ENCODE measurements at regions of chr5 and their contacts with region 1.

Region 1: DNA sequence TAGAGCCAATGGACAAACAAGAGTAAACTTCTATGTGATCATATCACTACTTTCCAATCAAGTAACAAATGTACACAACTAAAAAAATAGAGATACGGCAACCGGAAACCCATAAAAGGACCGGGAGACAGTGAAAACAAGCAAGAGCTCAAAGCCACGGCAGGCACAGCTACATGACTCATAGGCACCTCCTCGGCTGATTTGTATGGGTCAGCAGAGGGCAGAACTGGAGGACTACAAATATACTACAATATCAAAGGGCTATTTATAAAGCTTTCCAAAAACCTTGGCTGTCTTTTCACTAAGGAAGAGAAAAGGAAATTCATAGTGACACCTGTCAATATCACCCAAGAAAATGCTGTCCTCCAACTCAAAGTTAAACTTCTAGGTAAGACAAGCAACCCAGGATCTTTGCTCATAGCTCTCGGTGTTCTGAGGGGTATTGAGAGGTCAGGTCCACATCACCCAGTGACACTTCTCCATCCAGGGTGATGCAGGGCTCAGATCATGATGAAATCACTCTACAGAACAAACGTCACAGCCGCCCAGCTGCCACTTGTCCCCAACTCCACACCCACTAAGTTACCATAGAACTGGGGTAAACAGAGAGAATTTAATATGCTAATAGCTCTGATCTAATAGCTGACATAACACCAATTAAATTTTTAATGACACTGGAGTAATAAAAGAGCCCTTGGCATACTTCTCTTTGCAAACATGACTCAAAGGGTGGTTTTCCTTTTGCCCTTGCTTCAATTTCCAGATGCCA is 41.3 kb downstream of the PFDN1 start:
- DNase-seq: peak; percentile 88
- H3K4me3 Mint-ChIP-seq: peak overlapping the region; percentile 46
- H3K27ac Mint-ChIP-seq: peak overlapping the region; percentile 95
- H3K4me1 Mint-ChIP-seq: peaks cover 36% of the 10 kb centered on the region
- H3K27me3 Mint-ChIP-seq: no peaks in the 10 kb centered on the region
- CTCF ChIP-seq: no peak

Region 2: GRCh38 chr5:139795074-139796001 is 466.2 kb before region 1 on chr5 and contains the start of gene PSD2:
- CTCF ChIA-PET with region 1: no interaction called
- intact Hi-C with region 1: no loop called
- DNase-seq: peak; percentile 40
- H3K4me3 Mint-ChIP-seq: peak within 1 kb of the TSS; percentile 25
- H3K27ac Mint-ChIP-seq: no peak within 1 kb of the TSS
- H3K4me1 Mint-ChIP-seq: no peaks in the 10 kb centered on the region
- H3K27me3 Mint-ChIP-seq: peaks cover 95% of the 10 kb centered on the region
- CTCF ChIP-seq: no peak
- total RNA-seq, gene PSD2: not detected in 2 replicates

Region 3: DNA sequence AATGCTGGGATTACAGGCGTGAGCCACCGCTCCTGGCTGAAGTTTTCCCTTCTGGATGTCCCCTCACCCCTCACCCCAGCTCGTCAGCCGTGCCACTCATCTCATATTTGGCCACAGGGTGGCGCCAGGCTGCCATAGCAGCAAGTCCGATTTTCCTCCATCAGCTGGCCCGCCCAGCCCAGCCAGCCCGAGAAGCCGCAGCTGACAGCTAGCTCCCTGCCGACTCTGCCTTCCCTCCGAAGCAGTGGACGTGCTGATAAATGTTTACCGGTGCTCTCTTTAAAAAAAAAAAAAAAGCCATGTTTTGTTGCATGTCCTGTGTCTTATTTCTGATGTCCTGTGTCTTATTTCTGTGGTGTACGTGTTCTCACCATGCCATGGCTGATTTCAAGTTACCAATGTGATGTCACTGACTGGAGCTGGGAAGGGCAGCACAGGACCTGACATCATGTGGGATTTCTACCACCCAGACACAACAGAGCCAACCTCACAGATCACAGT is 17.0 kb before region 1 on chr5:
- CTCF ChIA-PET with region 1: interaction called, 13 read pairs
- intact Hi-C with region 1: no loop called
- DNase-seq: peak; percentile 92
- H3K4me3 Mint-ChIP-seq: no peak overlapping the region
- H3K27ac Mint-ChIP-seq: peak overlapping the region; percentile 67
- H3K4me1 Mint-ChIP-seq: peaks cover 31% of the 10 kb centered on the region
- H3K27me3 Mint-ChIP-seq: no peaks in the 10 kb centered on the region
- CTCF ChIP-seq: peak; percentile 83

Region 4: GRCh38 chr5:140295414-140295813 is 33.8 kb after region 1 on chr5:
- CTCF ChIA-PET with region 1: interaction called, 10 read pairs
- intact Hi-C with region 1: loop called (anchors 5 kb)
- DNase-seq: peak; percentile 63
- H3K4me3 Mint-ChIP-seq: no peak overlapping the region
- H3K27ac Mint-ChIP-seq: peak overlapping the region; percentile 62
- H3K4me1 Mint-ChIP-seq: peaks cover 60% of the 10 kb centered on the region
- H3K27me3 Mint-ChIP-seq: no peaks in the 10 kb centered on the region
- CTCF ChIP-seq: no peak

Region 5: DNA sequence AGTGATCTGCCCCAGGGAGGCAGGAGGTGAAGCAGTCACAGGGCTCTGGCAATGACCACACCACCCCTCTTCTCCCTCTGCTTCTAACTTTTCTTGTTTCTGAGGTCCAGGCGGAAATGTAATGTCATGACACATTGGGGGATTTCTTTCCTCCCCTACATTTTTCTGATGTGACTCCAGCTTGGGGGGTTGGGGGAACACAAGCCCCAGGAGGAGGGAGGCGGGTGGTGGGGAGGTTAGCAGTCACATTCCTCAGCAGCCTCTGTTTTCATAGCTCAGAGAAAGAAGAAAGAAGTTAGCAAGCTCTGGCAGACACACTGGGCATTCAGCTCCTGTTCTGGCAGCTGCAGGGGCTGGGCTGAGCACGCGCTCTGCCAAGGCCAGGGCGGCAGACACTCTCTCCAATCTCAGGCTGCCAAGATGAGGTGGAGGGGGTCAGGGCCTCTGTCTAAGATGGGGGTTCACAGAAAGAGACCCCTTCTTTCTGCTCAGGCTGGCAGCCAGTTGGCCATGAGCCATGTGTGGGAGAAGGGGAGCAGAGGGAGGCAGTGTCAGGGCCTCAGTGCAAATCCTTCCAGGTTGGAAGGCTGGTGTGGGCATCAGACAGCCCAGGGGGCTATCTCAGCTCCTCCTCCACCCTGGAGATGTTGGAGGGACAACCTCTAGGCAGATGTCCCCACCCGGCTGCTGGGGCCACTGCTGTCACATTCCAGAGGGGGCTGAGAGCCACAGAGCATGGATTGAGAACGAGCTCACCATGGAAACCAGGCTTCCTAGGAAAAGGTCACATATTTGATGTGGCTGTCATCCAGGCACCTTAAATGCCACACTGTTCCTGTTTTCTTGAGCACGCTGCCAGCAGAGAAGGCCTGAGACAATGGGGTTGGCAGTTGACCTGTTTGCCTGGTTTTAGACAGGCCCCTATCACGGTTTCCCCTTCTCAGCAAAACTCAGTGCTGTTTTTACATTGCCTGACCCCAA is 61.5 kb after region 1 on chr5:
- CTCF ChIA-PET with region 1: interaction called, 5 read pairs
- intact Hi-C with region 1: loop called (anchors 2 kb)
- DNase-seq: peak; percentile 63
- H3K4me3 Mint-ChIP-seq: no peak overlapping the region
- H3K27ac Mint-ChIP-seq: peak overlapping the region; percentile 55
- H3K4me1 Mint-ChIP-seq: peaks cover 39% of the 10 kb centered on the region
- H3K27me3 Mint-ChIP-seq: no peaks in the 10 kb centered on the region
- CTCF ChIP-seq: no peak

Measured in Calu3 (cell line).